Head of caudate nucleus (tissue), 42 donors: ENCODE measurements at regions of chr2 and their contacts with region 1.

Region 1: DNA sequence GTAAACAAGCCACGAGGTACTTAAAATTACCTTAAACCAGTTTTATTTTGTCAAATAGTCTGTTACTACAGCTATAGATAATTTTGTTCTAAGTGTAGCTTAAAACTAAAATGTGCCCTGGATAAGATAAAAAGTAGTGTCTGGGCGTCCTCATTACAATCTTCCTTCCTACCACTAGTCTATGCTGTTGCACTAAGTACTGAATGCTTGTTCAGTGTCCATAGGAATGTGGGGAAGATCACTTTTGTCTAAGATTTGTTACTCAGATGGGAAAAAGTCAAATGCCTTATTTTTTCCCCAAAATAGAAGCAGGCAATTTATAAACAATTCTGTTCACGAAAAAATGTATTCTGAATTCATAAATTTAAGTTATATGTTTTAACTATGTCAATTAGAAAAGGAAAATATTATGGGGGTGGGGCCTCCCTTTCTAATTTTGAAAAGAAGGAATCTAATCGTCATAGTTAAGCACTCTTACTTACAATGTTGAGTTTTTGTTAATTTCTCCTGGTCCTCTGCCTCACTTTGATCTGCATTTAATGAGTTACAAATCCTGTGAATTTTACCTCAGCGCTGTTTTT is 140.4 kb upstream of the VRK2 start:
- DNase-seq: peak in 3 of 42 donors; percentile 34 to 60 (median 39)

Region 2: DNA sequence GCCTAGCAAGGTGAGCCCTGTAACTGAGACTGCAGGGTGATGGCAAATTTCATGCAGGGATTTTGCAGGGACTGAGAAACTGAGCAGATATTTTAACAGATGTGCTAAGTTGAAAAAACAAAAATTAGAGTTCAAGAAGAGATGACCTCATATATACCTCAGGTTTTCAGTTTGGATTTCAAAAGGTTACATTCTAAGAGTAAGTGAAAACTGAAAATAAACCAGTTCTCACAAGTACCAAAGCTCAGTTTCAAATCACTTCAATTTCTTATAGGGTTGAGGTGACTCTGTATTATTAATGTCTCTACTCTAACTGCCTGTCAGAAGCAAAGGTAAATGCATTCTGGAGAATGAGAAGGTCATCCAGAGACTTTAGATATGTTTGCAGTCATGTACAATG is 97.0 kb before region 1 on chr2:
- intact Hi-C with region 1: no loop called
- DNase-seq: no peak

Region 3: GRCh38 chr2:58131191-58132011 is 225.2 kb after region 1 on chr2:
- intact Hi-C with region 1: loop called (anchors 10 kb)
- DNase-seq: peak in 7 of 42 donors; percentile 3 to 47 (median 28)

Region 4: DNA sequence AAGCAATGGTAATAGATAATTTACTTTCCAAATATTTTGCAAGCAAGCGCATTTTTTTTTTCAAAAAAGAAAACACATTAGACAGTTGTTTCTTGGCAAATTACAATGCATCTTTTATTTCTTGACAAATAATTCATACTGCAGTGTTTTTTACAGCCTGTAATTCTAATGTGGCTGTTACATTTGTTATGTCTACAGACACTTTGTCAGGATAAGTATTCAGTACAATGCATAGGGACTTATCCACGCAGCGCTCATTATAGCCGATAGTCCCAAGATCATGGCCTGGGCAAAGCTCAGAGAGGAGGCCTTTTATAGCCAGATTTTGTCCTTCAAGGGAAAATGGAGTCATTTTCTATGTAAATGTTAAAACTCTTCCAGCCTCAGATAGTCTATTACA is 457.9 kb after region 1 on chr2:
- intact Hi-C with region 1: no loop called
- DNase-seq: no peak

Region 5: GRCh38 chr2:58436872-58437271 is 530.6 kb after region 1 on chr2:
- intact Hi-C with region 1: loop called (anchors 10 kb)
- DNase-seq: no peak